Activated CD8-positive, alpha-beta T cell treated with anti-CD3 and anti-CD28 coated beads for 36 hours (primary cell): ENCODE measurements at regions of chr1 and their contacts with region 1.

Region 1: GRCh38 chr1:25700144-25700523 is 83.5 kb downstream of the MAN1C1 start:
- DNase-seq: no peak
- ATAC-seq: no peak
- H3K4me3 Mint-ChIP-seq: no peak overlapping the region
- H3K27ac Mint-ChIP-seq: no peak overlapping the region
- H3K4me1 Mint-ChIP-seq: peaks cover 50% of the 10 kb centered on the region
- H3K27me3 Mint-ChIP-seq: no peaks in the 10 kb centered on the region
- CTCF ChIP-seq: no peak

Region 2: DNA sequence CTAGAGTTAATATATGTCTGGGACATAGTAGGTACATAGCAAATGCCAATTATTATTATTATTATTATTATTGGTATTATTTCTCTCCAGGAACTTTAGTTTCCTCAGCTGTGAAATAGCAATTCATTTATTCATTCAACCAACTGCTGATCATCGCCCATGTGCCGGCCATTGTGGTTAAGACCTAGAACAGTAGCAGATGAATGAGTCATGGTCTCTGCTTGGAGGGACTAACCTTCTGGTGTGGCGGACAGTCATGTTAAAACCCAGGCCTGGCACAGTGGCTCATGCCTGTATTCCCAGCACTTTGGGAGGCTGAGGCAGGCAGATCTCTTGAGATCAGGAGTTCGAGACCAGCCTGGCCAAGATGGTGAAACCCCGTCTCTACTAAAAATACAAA is 180.5 kb before region 1 on chr1:
- CTCF ChIA-PET with region 1: no interaction called
- POLR2A ChIA-PET with region 1: no interaction called
- intact Hi-C with region 1: no loop called
- DNase-seq: no peak
- ATAC-seq: no peak
- H3K4me3 Mint-ChIP-seq: no peak overlapping the region
- H3K27ac Mint-ChIP-seq: no peak overlapping the region
- H3K4me1 Mint-ChIP-seq: peaks cover 4% of the 10 kb centered on the region
- H3K27me3 Mint-ChIP-seq: no peaks in the 10 kb centered on the region
- CTCF ChIP-seq: no peak

Region 3: DNA sequence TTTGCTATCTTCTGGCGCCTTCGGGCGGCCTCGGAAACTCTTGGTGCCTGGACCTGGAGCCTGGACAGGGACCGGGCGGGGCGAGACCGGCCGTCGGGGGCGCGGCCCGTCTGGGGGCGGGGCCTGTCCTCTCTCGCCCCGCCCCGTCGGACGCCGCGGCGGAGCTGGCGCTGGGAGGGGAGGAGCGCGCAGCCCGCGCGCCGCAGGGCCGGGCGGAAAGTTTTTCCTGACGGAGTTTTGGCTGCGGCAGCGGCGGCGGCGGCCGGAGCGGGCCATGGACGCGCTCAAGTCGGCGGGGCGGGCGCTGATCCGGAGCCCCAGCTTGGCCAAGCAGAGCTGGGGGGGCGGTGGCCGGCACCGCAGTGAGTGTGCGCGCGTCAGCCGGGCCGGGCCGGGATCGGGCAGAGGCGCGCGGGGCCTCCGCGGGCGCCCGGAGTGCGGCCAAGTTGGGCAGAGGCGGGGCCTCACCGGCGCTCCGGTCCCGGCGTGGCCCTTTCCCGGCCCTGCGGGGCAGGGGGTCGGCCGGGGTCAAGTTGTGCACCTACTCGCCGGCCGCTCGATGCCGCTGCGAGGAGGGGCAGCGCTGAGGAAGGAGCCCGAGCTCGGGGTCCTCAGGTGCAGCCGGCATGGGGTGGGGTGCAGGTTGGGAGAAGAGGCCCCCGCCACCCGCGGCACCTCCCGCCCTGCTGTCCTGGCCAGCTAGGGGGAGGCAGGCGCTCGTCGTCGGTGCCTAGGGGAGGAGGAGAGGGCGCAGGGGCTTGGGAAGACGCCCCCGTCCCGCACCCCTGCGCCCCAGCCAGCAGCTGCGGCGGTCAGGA is 156.5 kb before region 1 on chr1 and contains the start of gene LDLRAP1:
- CTCF ChIA-PET with region 1: no interaction called
- POLR2A ChIA-PET with region 1: no interaction called
- intact Hi-C with region 1: loop called (anchors 10 kb)
- DNase-seq: peak; percentile 58
- ATAC-seq: peak; percentile 92
- H3K4me3 Mint-ChIP-seq: peak within 1 kb of the TSS; percentile 82
- H3K27ac Mint-ChIP-seq: peak within 1 kb of the TSS; percentile 75
- H3K4me1 Mint-ChIP-seq: peaks cover 39% of the 10 kb centered on the region
- H3K27me3 Mint-ChIP-seq: no peaks in the 10 kb centered on the region
- CTCF ChIP-seq: no peak
- total RNA-seq, gene LDLRAP1: 13.4 to 14.5 TPM

Region 4: GRCh38 chr1:25590096-25590824 is 109.9 kb before region 1 on chr1:
- CTCF ChIA-PET with region 1: no interaction called
- POLR2A ChIA-PET with region 1: no interaction called
- intact Hi-C with region 1: no loop called
- DNase-seq: no peak
- ATAC-seq: no peak
- H3K4me3 Mint-ChIP-seq: no peak overlapping the region
- H3K27ac Mint-ChIP-seq: no peak overlapping the region
- H3K4me1 Mint-ChIP-seq: peaks cover 9% of the 10 kb centered on the region
- H3K27me3 Mint-ChIP-seq: no peaks in the 10 kb centered on the region
- CTCF ChIP-seq: no peak

Region 5: DNA sequence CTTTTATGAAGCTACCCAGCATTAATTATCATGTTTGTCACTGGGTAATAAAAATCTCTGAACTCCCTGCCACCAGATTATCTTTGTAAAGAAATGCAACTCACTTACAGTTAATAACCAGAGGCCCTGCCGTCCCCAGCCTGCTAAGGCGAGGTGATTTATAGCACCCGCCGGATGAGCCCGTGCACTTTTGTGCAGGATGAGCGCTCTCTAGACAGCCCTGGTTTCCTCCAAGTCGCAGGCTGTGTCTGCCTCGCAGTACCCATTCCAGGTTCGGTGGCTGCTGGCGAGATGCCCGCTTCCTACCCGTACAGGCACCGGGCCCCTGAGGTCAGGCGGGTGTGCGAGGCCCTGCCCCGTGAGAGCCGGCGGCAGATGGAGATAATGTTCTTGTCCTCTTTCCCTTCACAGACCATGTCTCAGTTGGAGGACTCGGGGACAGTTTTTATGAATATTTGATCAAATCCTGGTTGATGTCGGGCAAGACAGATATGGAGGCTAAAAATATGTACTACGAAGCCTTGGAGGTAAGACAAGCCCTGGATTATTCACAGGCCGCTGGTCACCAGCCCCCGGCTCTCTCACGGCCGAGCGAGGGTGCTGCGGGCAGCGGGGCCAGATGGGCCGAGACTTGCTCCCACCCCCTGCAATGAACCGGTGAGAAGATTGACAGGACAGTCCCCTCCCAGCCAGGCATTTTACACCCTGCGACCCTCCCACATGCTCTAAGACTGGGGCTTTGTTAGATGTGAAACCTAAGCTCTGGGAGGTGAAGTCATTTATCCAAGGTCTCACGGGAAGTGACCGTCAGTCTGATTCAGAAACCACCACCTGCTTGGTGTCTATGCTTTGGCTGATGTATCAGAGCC is 71.3 kb after region 1 on chr1:
- CTCF ChIA-PET with region 1: no interaction called
- POLR2A ChIA-PET with region 1: no interaction called
- intact Hi-C with region 1: no loop called
- DNase-seq: peak; percentile 55
- ATAC-seq: peak; percentile 22
- H3K4me3 Mint-ChIP-seq: no peak overlapping the region
- H3K27ac Mint-ChIP-seq: peak overlapping the region; percentile 15
- H3K4me1 Mint-ChIP-seq: peaks cover 80% of the 10 kb centered on the region
- H3K27me3 Mint-ChIP-seq: no peaks in the 10 kb centered on the region
- CTCF ChIP-seq: no peak